ENCODE measurements at regions of chr2 and their contacts with region 1.

Region 1: GRCh38 chr2:38106405-38107094 is 30.6 kb upstream of the CYP1B1 start:
- DNase-seq: no peak
- H3K4me3 Mint-ChIP-seq: no peak overlapping the region
- H3K27ac Mint-ChIP-seq: peak overlapping the region; percentile 80
- H3K4me1 Mint-ChIP-seq: peaks cover 26% of the 10 kb centered on the region
- H3K27me3 Mint-ChIP-seq: no peaks in the 10 kb centered on the region
- CTCF ChIP-seq: no peak

Region 2: DNA sequence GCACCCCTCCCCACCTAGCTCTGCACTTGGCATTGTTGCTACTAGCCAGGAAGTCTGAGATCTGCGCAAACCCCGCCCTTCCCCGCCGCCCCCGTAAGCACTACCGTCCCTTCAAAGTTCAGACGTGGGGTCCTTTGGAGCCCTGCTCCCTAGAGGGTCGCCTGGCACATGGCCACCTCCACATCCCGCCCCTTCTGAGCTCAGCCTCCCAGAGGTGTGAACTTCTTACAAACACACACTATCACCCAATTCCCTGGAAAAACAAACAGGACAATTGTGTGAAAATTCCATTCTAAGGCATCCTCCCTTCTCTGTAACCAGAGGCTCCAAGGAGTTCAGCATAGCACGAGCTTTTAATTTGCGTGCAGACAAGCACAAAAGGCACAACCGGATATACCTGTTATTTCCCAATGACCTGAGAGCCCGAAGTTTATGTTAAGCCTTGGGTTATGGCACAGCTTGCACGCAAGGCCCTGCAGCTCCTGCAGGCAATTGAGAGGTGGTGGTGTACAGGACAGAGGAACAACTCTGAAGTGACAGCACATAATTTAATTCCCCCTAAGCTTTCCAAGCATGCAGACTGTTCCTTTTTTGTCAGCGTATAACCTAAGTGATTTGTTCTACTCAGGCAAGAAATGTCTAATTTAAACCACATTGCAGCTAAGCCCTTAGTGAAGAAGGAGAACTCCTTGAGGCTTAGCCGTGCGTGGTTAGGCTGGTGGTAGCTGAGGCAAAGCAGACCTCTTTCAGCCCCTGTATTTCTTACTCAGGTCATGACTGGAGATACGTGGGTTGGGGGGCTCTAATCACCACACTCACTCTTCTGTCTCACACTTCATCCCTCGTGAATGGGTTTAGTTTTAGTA is 10.3 kb before region 1 on chr2:
- CTCF ChIA-PET with region 1: interaction called, 8 read pairs
- POLR2A ChIA-PET with region 1: interaction called, 86 read pairs
- intact Hi-C with region 1: no loop called
- DNase-seq: peak; percentile 96
- H3K4me3 Mint-ChIP-seq: no peak overlapping the region
- H3K27ac Mint-ChIP-seq: peak overlapping the region; percentile 79
- H3K4me1 Mint-ChIP-seq: peaks cover 54% of the 10 kb centered on the region
- H3K27me3 Mint-ChIP-seq: no peaks in the 10 kb centered on the region
- CTCF ChIP-seq: no peak

Measured in MCF 10A (cell line).